ENCODE measurements at regions of chr4 and their contacts with region 1.

Region 1: DNA sequence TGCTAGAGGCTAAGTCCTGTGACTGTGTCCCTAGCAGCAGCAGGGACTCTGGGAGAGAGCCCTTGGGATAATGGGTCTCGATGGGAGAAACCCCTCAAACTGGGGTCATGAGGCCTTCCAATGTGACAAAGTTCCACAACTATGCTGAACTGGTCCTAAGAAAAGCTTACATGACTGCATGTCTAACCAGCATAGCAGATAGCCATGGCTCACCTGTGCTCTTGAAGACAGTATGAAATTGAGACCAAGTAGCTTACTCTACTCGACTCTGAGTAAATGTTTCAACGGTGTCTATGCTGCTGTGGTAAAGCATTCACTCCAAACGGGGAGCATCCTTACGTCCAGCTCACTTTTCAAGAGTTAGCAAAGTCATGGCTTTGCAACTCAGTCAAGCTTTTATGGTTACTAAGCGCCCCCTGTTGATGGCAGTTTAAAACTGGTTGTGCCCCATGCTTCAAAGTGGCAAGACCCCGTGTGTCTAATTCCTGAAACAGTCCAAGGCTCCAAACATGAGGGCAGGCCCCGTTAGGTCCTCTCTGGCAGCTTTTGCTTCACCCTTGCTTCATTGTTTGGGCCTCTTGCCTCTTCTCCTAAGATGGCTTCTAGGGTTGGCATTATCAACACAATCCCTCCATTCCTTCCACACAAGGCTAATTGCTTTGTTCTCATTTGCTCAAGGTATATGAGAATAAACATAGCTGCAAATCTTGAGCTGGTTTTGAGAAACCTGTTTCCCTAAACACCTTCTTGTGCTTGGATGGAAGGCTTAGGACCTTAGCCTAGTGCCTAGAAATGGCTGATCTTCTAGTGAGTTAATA is 46.6 kb downstream of the CCNG2 start:
- DNase-seq: peak; percentile 64
- CTCF ChIP-seq: peak; percentile 63

Region 2: GRCh38 chr4:77095101-77095821 is 108.3 kb before region 1 on chr4:
- in situ Hi-C with region 1: loop called (anchors 5 kb)
- DNase-seq: peak; percentile 69
- CTCF ChIP-seq: peak; percentile 75

Measured in GM13976 (cell line).